ENCODE measurements at regions of chr14 and their contacts with region 1.

Region 1: DNA sequence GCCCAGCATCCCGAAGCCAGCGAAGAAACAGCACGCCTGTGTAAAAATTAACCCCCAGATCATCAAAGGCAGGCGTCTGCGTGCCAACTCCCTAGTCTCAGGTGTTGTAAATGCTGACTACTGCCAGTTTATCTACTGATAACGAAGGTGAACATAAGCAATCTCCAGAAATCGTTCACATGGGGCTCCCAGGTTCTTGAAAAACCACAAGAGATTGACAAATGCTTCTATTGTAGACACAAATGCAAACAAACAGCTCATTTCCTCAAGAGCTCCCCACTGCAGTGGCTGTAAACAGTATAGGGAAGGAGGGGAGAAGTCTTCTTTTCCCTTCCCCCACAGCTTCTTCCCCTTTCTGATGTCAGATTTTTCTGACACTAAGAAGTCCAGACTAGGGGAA is 5.3 kb upstream of the PLEKHG3 start:
- DNase-seq: peak; percentile 72
- ATAC-seq: peak; percentile 51
- H3K4me3 ChIP-seq: no peak overlapping the region
- H3K27ac ChIP-seq: no peak overlapping the region
- H3K4me1 ChIP-seq: peaks cover 41% of the 10 kb centered on the region
- H3K27me3 ChIP-seq: no peaks in the 10 kb centered on the region
- CTCF ChIP-seq: no peak

Region 2: GRCh38 chr14:64681796-64682710 is 16.9 kb before region 1 on chr14:
- CTCF ChIA-PET with region 1: interaction called, 4 read pairs
- POLR2A ChIA-PET with region 1: interaction called, 3 read pairs
- intact Hi-C with region 1: loop called (anchors 1 kb)
- DNase-seq: peak; percentile 72
- ATAC-seq: peak; percentile 83
- H3K4me3 ChIP-seq: no peak overlapping the region
- H3K27ac ChIP-seq: peak overlapping the region; percentile 67
- H3K4me1 ChIP-seq: peaks cover 38% of the 10 kb centered on the region
- H3K27me3 ChIP-seq: no peaks in the 10 kb centered on the region
- CTCF ChIP-seq: peak; percentile 38; the same call in 1 of the 2 replicates

Region 3: DNA sequence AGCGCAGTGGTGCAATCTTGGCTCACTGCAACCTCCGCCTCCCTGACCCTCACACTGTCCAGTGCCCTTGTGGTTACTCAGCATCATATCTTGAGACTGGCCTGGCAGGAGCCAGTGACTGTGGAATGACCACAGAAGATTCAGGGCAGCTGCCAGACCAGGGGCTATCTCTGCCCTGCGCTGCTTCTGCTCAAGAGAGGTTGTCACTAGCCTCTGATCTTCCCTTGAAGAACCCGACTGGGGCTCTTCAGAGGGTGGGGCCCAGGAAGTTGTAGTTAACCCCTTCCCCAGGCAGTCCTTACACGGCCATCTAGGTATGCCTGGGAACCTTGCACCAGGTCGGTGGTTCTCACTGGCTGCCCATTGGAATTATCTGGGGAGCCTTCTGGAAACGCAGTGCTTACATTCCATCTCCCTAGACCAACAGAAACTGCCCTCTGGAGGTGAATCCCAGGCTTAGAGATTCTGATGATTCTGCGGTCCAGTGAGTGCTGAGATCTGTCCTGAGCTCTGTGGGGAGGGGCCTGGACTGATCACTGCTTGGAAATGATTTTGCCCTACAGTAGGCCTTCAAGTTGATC is 46.7 kb after region 1 on chr14:
- CTCF ChIA-PET with region 1: interaction called, 13 read pairs
- POLR2A ChIA-PET with region 1: no interaction called
- intact Hi-C with region 1: no loop called
- DNase-seq: no peak
- ATAC-seq: peak; percentile 39
- H3K4me3 ChIP-seq: no peak overlapping the region
- H3K27ac ChIP-seq: no peak overlapping the region
- H3K4me1 ChIP-seq: no peaks in the 10 kb centered on the region
- H3K27me3 ChIP-seq: no peaks in the 10 kb centered on the region
- CTCF ChIP-seq: 0 out of 2 replicates have a peak, but pooled peaks have one; percentile 33

Region 4: GRCh38 chr14:64826845-64827244 is 127.9 kb after region 1 on chr14:
- CTCF ChIA-PET with region 1: no interaction called
- POLR2A ChIA-PET with region 1: no interaction called
- intact Hi-C with region 1: no loop called
- DNase-seq: no peak
- ATAC-seq: no peak
- H3K4me3 ChIP-seq: no peak overlapping the region
- H3K27ac ChIP-seq: no peak overlapping the region
- H3K4me1 ChIP-seq: no peaks in the 10 kb centered on the region; the same call in 1 of the 2 replicates
- H3K27me3 ChIP-seq: no peaks in the 10 kb centered on the region
- CTCF ChIP-seq: no peak